SK-N-SH (cell line): ENCODE measurements at regions of chr10 and their contacts with region 1.

Region 1: GRCh38 chr10:77756319-77757232 is 119.0 kb upstream of the KCNMA1 start:
- DNase-seq: peak; percentile 65
- H3K4me3 ChIP-seq: no peak overlapping the region; a peak in 1 of 4 replicates
- H3K27ac ChIP-seq: no peak overlapping the region
- H3K4me1 ChIP-seq: peaks cover 0 to 3% of the 10 kb centered on the region in 2 experiments; a peak in 1 of 4 replicates
- H3K27me3 ChIP-seq: no peaks in the 10 kb centered on the region
- CTCF ChIP-seq: peak; percentile 89
- EP300 ChIP-seq: no peak
- RAD21 ChIP-seq: peak; percentile 89

Region 2: GRCh38 chr10:77661100-77661499 is 95.5 kb before region 1 on chr10:
- CTCF ChIA-PET with region 1: no interaction called
- POLR2A ChIA-PET with region 1: no interaction called
- DNase-seq: no peak
- H3K4me3 ChIP-seq: no peak overlapping the region
- H3K27ac ChIP-seq: no peak overlapping the region
- H3K4me1 ChIP-seq: no peaks in the 10 kb centered on the region; a peak in 1 of 4 replicates
- H3K27me3 ChIP-seq: no peaks in the 10 kb centered on the region
- CTCF ChIP-seq: no peak
- EP300 ChIP-seq: no peak
- RAD21 ChIP-seq: no peak

Region 3: DNA sequence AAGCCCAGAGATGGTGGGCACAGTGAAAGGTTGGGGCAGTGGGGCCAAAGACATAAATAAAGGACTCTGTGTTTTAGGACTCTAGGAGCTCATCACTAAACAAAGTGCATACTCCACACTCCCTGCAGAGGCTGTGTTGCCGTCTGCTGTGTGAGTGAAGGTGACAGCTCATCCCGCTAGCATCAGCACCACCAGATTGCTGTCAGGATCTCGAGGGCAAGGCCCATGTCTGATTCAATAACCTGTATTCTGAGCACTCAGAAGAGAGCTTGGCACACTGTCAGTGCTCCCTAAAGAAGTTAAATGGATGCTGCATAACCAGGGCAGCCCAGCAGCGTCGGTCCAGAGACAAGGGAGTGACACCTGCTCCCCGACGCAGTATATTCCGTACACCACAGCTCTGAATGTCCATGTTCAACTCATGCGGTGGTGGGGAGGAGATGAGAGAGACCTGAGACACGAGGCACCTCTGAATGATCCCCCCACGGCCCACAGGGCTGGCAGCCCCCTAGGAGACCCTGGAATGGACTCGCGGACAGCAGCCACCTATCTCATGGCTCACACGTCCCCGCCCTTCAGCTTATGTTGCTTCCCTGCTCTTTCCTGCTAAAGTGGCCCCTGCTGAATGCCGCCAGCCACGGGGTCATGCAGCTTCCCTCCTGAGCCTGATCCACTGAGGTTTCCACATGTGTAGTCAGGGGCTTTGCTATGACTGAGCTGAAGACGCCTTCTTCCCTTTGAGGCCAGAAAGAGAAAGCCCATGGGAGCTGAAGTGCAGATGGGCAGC is 13.7 kb after region 1 on chr10:
- CTCF ChIA-PET with region 1: interaction called, 18 read pairs
- POLR2A ChIA-PET with region 1: no interaction called
- DNase-seq: no peak
- H3K4me3 ChIP-seq: no peak overlapping the region
- H3K27ac ChIP-seq: no peak overlapping the region
- H3K4me1 ChIP-seq: peaks cover 0 to 3% of the 10 kb centered on the region in 2 experiments; a peak in 1 of 4 replicates
- H3K27me3 ChIP-seq: no peaks in the 10 kb centered on the region
- CTCF ChIP-seq: no peak
- EP300 ChIP-seq: no peak
- RAD21 ChIP-seq: no peak

Region 4: GRCh38 chr10:77782328-77783061 is 25.9 kb after region 1 on chr10:
- CTCF ChIA-PET with region 1: no interaction called
- POLR2A ChIA-PET with region 1: no interaction called
- DNase-seq: no peak
- H3K4me3 ChIP-seq: no peak overlapping the region
- H3K27ac ChIP-seq: no peak overlapping the region
- H3K4me1 ChIP-seq: peaks cover 0 to 4% of the 10 kb centered on the region in 2 experiments; a peak in 1 of 4 replicates
- H3K27me3 ChIP-seq: no peaks in the 10 kb centered on the region
- CTCF ChIP-seq: no peak
- EP300 ChIP-seq: no peak
- RAD21 ChIP-seq: no peak

Region 5: GRCh38 chr10:77793506-77794230 is 37.1 kb after region 1 on chr10:
- CTCF ChIA-PET with region 1: no interaction called
- POLR2A ChIA-PET with region 1: no interaction called
- DNase-seq: no peak
- H3K4me3 ChIP-seq: no peak overlapping the region
- H3K27ac ChIP-seq: no peak overlapping the region; a peak in 1 of 4 replicates
- H3K4me1 ChIP-seq: no peaks in the 10 kb centered on the region; a peak in 1 of 4 replicates
- H3K27me3 ChIP-seq: no peaks in the 10 kb centered on the region
- CTCF ChIP-seq: no peak
- EP300 ChIP-seq: no peak
- RAD21 ChIP-seq: no peak